Tibial artery (tissue), 4 donors: ENCODE measurements at regions of chr4 and their contacts with region 1.

Region 1: GRCh38 chr4:16196478-16197393 is 29.5 kb downstream of the TAPT1 start:
- DNase-seq: no peak
- H3K4me3 ChIP-seq: peak overlapping the region; percentile 38 to 40
- H3K27ac ChIP-seq: peak overlapping the region; percentile 68 to 71
- H3K4me1 ChIP-seq: peaks cover 0 to 68% (median 19%) of the 10 kb centered on the region in 4 donors
- H3K27me3 ChIP-seq: no peaks in the 10 kb centered on the region
- CTCF ChIP-seq: peak; percentile 45 to 47

Region 2: GRCh38 chr4:16264798-16265197 is 68.1 kb after region 1 on chr4:
- intact Hi-C with region 1: loop called (anchors 5 kb)
- DNase-seq: no peak
- H3K4me3 ChIP-seq: no peak overlapping the region
- H3K27ac ChIP-seq: no peak overlapping the region
- H3K4me1 ChIP-seq: peaks cover 0 to 8% (median 4%) of the 10 kb centered on the region in 4 donors
- H3K27me3 ChIP-seq: no peaks in the 10 kb centered on the region
- CTCF ChIP-seq: peak; percentile 56 to 63

Region 3: GRCh38 chr4:18155062-18156041 is 1958.6 kb after region 1 on chr4:
- intact Hi-C with region 1: no loop called
- DNase-seq: no peak
- H3K4me3 ChIP-seq: no peak overlapping the region
- H3K27ac ChIP-seq: no peak overlapping the region
- H3K4me1 ChIP-seq: no peaks in the 10 kb centered on the region
- H3K27me3 ChIP-seq: no peaks in the 10 kb centered on the region
- CTCF ChIP-seq: no peak